ENCODE measurements at regions of chr9 and their contacts with region 1.

Region 1: DNA sequence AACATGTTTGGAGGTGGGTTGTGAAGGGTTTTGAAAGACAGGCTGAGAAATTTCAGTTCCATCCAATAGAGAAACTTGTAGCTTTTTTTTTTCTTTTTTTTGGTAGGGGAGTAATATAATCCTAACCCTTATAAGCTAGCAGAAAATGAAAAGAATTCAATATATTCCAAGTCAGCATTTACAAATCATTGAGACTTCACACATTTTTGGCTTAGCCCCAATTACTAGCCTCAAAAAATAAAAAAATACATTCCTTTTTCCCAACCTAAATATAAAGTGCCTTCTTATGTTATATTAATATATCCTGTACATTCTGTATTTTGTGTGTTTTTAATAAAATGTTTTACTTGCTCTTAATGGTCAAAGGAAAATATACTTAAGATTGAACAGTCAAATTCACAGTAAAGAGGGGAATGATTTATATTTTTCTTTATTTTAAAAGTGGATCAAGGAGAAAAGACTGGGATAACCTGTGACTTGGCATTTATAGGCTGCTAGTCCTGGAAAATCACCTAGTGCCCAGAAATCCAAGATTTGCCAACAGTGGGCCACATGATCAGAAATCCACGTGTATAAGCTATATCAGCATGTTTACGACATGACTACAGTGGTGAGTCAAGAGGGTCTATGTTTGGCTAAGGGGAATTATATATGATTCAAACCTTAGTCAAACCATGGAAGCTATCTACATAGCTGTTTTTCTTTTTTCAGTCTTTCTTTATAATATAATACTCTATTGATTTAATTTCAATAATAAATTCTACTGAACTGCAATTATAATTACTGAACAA is 14.5 kb downstream of the HACD4 start:
- DNase-seq: no peak
- ATAC-seq: no peak
- H3K4me3 ChIP-seq: no peak overlapping the region
- H3K27ac ChIP-seq: no peak overlapping the region
- H3K4me1 ChIP-seq: peaks cover 0 to 12% (median 3%) of the 10 kb centered on the region in 9 donors
- H3K27me3 ChIP-seq: no peaks in the 10 kb centered on the region
- CTCF ChIP-seq: no peak

Region 2: GRCh38 chr9:20950707-20951106 is 66.2 kb before region 1 on chr9:
- intact Hi-C with region 1: loop called in 1 of 10 experiments (anchors 10 kb)
- DNase-seq: no peak
- ATAC-seq: no peak
- H3K4me3 ChIP-seq: no peak overlapping the region
- H3K27ac ChIP-seq: no peak overlapping the region
- H3K4me1 ChIP-seq: no peaks in the 10 kb centered on the region
- H3K27me3 ChIP-seq: no peaks in the 10 kb centered on the region
- CTCF ChIP-seq: no peak

Region 3: GRCh38 chr9:20997503-20998076 is 19.3 kb before region 1 on chr9:
- intact Hi-C with region 1: loop called in 1 of 10 experiments (anchors 2 kb)
- DNase-seq: no peak
- ATAC-seq: no peak
- H3K4me3 ChIP-seq: no peak overlapping the region
- H3K27ac ChIP-seq: no peak overlapping the region
- H3K4me1 ChIP-seq: peaks cover 0 to 9% (median 0%) of the 10 kb centered on the region in 9 donors
- H3K27me3 ChIP-seq: no peaks in the 10 kb centered on the region
- CTCF ChIP-seq: no peak

Measured in heart right ventricle (tissue), 16 donors.